Activated CD4-positive, alpha-beta memory T cell treated with anti-CD3 and anti-CD28 coated beads, Interleukin-2, amount 10 ng/mL, durations not matched to agents 7 days and 5 days (primary cell): ENCODE measurements at regions of chr20 and their contacts with region 1.

Region 1: DNA sequence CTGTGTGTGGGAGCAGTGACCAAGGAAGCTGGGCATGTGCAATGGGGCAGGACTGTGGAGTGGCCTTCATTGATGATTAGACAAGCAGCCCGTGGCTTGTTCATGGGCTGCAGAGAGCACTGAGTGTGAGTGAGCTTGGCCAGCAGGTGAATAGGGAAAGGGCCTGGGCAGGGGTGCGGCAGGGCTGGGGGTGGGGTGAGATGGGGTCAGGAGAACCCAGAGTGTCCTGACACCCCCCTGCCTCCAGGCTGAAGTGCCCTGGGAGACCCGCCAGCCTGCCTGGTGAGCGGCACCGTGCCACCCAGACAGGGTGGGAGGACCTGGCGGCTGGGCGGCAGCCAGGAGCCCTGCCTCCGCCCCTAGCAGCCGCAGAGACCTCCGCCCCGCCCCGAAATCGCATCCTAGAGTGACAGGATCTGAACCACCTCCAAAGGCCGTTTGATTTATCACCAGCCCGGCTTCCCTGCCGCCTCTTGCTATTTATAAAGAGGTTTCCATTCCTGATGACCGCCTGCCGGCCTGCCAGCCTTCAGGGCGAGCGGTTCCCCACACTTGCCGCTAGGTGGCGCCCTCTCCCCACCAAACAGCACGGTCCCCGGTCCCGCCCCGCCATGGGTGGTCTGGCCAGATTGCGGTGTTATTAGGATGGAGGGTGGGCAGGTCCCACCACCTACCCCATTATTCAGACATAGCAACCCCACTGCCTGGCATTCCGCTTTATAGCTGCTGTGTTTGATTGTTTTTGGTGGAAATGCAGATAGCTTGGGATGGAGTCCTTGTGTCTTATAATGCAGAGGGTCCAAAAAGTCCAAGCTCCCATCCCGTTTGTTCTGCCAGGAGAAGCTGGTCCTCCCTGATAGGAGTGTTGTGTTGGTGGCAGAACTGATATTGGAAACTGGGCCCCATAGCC is 3.5 kb downstream of the MYLK2 start:
- DNase-seq: peak; percentile 75
- H3K4me3 Mint-ChIP-seq: no peak overlapping the region
- H3K27ac Mint-ChIP-seq: no peak overlapping the region
- H3K4me1 Mint-ChIP-seq: peaks cover 6% of the 10 kb centered on the region
- H3K27me3 Mint-ChIP-seq: no peaks in the 10 kb centered on the region

Region 2: GRCh38 chr20:31547017-31547675 is 275.5 kb before region 1 on chr20:
- CTCF ChIA-PET with region 1: no interaction called
- POLR2A ChIA-PET with region 1: no interaction called
- DNase-seq: peak; percentile 85
- H3K4me3 Mint-ChIP-seq: peak overlapping the region; percentile 93
- H3K27ac Mint-ChIP-seq: peak overlapping the region; percentile 96
- H3K4me1 Mint-ChIP-seq: peaks cover 44% of the 10 kb centered on the region
- H3K27me3 Mint-ChIP-seq: no peaks in the 10 kb centered on the region

Region 3: GRCh38 chr20:31806564-31807355 is 15.9 kb before region 1 on chr20:
- CTCF ChIA-PET with region 1: interaction called, 13 read pairs
- POLR2A ChIA-PET with region 1: interaction called, 3 read pairs
- DNase-seq: no peak
- H3K4me3 Mint-ChIP-seq: no peak overlapping the region
- H3K27ac Mint-ChIP-seq: no peak overlapping the region
- H3K4me1 Mint-ChIP-seq: peaks cover 8% of the 10 kb centered on the region
- H3K27me3 Mint-ChIP-seq: no peaks in the 10 kb centered on the region

Region 4: DNA sequence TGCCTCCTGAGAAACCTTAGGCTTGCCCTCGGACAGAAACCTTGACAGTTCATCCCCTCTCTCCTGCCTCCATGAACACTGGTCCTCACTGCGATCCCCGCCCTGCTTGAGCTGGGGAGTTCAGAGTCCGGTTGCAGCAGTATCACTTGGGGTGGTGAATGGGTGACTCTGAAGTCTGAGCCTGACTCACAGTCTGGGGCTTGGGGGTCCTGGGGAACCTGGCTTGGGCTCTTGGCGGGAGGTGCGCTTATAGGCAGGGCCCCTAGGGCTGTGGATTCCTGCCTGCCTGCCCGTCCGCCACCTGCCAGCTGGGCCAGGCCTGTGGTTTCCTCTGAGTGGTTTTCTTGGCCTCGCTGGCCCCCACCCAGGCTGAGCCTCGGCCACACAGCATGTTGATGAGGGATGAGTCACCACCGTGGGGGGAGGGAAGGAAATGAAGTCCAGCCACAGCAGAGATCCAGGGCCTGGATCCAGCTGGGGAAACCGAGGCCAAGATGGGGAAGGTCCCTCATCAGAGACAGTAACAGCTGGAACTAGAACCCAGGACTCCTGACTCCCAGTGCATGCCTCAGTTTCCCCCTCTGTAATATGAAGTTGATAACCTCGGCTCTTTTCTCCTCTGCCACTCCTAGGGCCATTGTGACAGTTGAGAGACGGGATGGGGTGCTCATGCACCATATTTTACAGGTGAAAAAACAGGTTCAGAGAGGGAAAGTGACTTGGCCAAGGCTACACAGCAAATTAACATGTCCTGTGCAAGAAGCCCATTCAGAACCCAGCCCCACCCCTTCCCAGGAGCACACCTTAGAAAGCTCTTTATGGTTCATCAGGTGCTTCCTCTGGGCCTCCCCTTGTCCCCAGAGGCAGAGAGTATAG is 13.5 kb after region 1 on chr20:
- CTCF ChIA-PET with region 1: interaction called, 35 read pairs
- POLR2A ChIA-PET with region 1: interaction called, 4 read pairs
- DNase-seq: peak; percentile 65
- H3K4me3 Mint-ChIP-seq: no peak overlapping the region
- H3K27ac Mint-ChIP-seq: no peak overlapping the region
- H3K4me1 Mint-ChIP-seq: peaks cover 26% of the 10 kb centered on the region
- H3K27me3 Mint-ChIP-seq: no peaks in the 10 kb centered on the region

Region 5: DNA sequence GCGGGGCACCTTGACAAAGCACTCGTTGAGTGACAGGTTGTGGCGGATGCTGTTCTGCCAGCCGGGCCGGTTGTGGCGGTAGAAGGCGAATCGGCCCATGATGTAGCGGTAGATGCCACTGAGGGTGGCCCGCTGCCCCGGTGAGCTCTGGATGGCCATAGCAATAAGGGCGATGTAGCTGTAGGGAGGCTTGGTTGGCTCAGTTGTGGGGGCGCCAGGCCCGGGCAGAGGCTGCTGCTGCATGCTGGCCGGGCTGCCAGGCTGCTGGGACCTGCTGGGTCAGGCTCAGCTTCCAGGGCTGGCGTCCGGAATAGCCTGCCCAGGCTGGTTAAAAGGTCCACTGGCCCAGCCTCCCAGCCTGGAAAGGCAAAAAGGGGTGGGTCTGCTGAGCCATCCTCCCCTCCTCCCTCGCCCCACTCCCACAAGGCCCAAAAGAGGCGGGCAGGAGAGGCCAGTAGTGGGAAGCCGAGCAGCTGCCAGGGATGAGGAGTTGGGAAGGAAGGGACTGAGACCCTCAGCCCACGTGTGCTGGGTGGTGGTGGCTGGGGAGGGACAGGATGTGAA is 22.7 kb after region 1 on chr20 and contains the start of gene FOXS1:
- CTCF ChIA-PET with region 1: interaction called, 54 read pairs
- POLR2A ChIA-PET with region 1: interaction called, 3 read pairs
- DNase-seq: no peak
- H3K4me3 Mint-ChIP-seq: no peak within 1 kb of the TSS
- H3K27ac Mint-ChIP-seq: no peak within 1 kb of the TSS
- H3K4me1 Mint-ChIP-seq: peaks cover 2% of the 10 kb centered on the region
- H3K27me3 Mint-ChIP-seq: peaks cover 15% of the 10 kb centered on the region
- total RNA-seq, gene FOXS1: not detected

Region 6: GRCh38 chr20:31951530-31952453 is 129.1 kb after region 1 on chr20 and contains the start of gene PDRG1:
- CTCF ChIA-PET with region 1: interaction called, 22 read pairs
- POLR2A ChIA-PET with region 1: no interaction called
- DNase-seq: peak; percentile 98
- H3K4me3 Mint-ChIP-seq: peak within 1 kb of the TSS; percentile 96
- H3K27ac Mint-ChIP-seq: peak within 1 kb of the TSS; percentile 87
- H3K4me1 Mint-ChIP-seq: peaks cover 29% of the 10 kb centered on the region
- H3K27me3 Mint-ChIP-seq: peaks cover 10% of the 10 kb centered on the region
- total RNA-seq, gene PDRG1: 10.8 TPM

Region 7: GRCh38 chr20:32031007-32031958 is 208.6 kb after region 1 on chr20:
- CTCF ChIA-PET with region 1: interaction called, 19 read pairs
- POLR2A ChIA-PET with region 1: no interaction called
- DNase-seq: peak; percentile 58
- H3K4me3 Mint-ChIP-seq: no peak overlapping the region
- H3K27ac Mint-ChIP-seq: no peak overlapping the region
- H3K4me1 Mint-ChIP-seq: no peaks in the 10 kb centered on the region
- H3K27me3 Mint-ChIP-seq: peaks cover 40% of the 10 kb centered on the region

Region 8: GRCh38 chr20:32091888-32092346 is 269.2 kb after region 1 on chr20:
- CTCF ChIA-PET with region 1: interaction called, 35 read pairs
- POLR2A ChIA-PET with region 1: no interaction called
- DNase-seq: peak; percentile 80
- H3K4me3 Mint-ChIP-seq: no peak overlapping the region
- H3K27ac Mint-ChIP-seq: no peak overlapping the region
- H3K4me1 Mint-ChIP-seq: no peaks in the 10 kb centered on the region
- H3K27me3 Mint-ChIP-seq: peaks cover 15% of the 10 kb centered on the region